Upper lobe of right lung (tissue), 1 donor: ENCODE measurements at regions of chr1 and their contacts with region 1.

Region 1: GRCh38 chr1:205791568-205792180 is 16.4 kb upstream of the RAB29 start:
- DNase-seq: no peak
- ATAC-seq: peak; percentile 92
- H3K4me3 ChIP-seq: no peak overlapping the region
- H3K27ac ChIP-seq: no peak overlapping the region
- H3K4me1 ChIP-seq: no peaks in the 10 kb centered on the region
- H3K27me3 ChIP-seq: no peaks in the 10 kb centered on the region
- CTCF ChIP-seq: peak; percentile 74

Region 2: DNA sequence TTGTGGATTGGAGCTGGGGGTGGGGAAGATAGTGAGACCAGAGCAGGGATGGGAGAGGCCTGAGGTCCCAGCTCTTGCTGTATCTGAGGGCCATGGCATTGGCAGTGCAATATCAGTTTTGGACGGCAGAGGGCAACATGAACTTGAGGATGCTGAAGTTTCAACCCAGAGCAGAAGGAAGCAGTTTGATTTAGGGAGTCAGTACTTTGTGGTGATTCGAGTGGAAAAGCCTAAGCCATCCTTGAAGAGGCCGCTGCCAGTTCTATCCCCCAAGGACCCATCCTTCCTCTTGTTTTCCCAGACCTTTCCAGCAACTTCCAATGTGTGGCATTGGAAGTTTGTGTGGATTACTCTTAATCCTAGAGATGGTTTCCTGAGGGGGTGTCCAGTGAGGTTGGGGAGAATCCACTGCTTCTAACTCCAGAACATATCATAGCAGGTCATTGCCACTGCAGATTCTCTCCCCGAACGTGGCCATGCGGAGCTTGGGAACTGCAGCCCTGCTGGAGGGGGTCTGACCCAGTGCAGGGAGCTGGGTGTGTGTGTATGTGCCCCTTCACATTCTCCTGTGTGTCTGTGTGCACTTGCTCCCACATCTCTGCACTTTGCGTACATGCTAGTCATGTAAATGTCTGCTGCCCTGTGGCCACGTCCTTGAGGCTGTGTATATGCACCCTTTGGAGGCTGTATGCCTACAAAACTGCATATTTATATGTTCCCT is 127.5 kb after region 1 on chr1:
- intact Hi-C with region 1: loop called (anchors 10 kb)
- DNase-seq: no peak
- ATAC-seq: peak; percentile 84
- H3K4me3 ChIP-seq: no peak overlapping the region
- H3K27ac ChIP-seq: peak overlapping the region; percentile 68
- H3K4me1 ChIP-seq: peaks cover 26% of the 10 kb centered on the region
- H3K27me3 ChIP-seq: no peaks in the 10 kb centered on the region
- CTCF ChIP-seq: peak; percentile 95